Heart left ventricle (tissue), 16 donors: ENCODE measurements at regions of chr4 and their contacts with region 1.

Region 1: GRCh38 chr4:57158221-57158620 is 48.0 kb upstream of the IGFBP7 start:
- DNase-seq: no peak
- ATAC-seq: peak in 2 of 4 donors; percentile 47 to 50
- H3K4me3 ChIP-seq: no peak overlapping the region
- H3K27ac ChIP-seq: no peak overlapping the region
- H3K4me1 ChIP-seq: peaks cover 0 to 5% (median 0%) of the 10 kb centered on the region in 12 donors
- H3K27me3 ChIP-seq: no peaks in the 10 kb centered on the region
- CTCF ChIP-seq: peak in 4 of 12 donors; percentile 9 to 31 (median 18)
- POLR2A ChIP-seq: no peak

Region 2: DNA sequence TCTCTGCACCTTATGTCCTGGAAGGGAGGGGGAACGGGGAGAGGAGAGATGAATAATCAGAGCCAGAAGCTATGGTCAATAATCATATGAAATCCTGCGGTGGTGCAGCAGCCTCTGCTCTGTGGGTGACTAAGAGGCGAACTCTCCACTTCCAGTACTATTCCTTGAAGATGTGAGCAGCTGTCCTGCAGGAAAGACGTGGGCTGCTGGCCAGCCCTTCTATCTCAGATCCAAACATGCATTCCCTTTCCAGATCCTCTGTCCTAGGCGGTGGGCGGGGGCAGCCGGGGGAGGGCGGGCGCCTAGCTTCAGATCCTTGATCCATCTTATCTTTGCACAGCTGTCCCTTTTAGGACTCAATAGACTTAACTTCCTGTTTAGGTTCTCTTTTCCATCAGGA is 371.3 kb before region 1 on chr4:
- intact Hi-C with region 1: no loop called
- DNase-seq: peak; percentile 64 to 84 (median 79)
- ATAC-seq: peak; percentile 62 to 97 (median 88)
- H3K4me3 ChIP-seq: no peak overlapping the region
- H3K27ac ChIP-seq: peak overlapping the region in 10 of 12 donors; percentile 13 to 74 (median 53)
- H3K4me1 ChIP-seq: peaks cover 0 to 15% (median 0%) of the 10 kb centered on the region in 12 donors
- H3K27me3 ChIP-seq: no peaks in the 10 kb centered on the region
- CTCF ChIP-seq: no peak
- POLR2A ChIP-seq: no peak

Region 3: GRCh38 chr4:57037982-57038604 is 120.1 kb before region 1 on chr4:
- intact Hi-C with region 1: loop called in 9 of 10 experiments (anchors 2 to 10 kb)
- DNase-seq: peak; percentile 61 to 84 (median 67)
- ATAC-seq: peak; percentile 57 to 79 (median 66)
- H3K4me3 ChIP-seq: no peak overlapping the region
- H3K27ac ChIP-seq: peak overlapping the region in 3 of 12 donors; percentile 6 to 19 (median 18)
- H3K4me1 ChIP-seq: peaks cover 1 to 42% (median 19%) of the 10 kb centered on the region in 12 donors
- H3K27me3 ChIP-seq: no peaks in the 10 kb centered on the region
- CTCF ChIP-seq: peak; percentile 61 to 94 (median 82)
- POLR2A ChIP-seq: no peak

Region 4: GRCh38 chr4:57119054-57119651 is 39.1 kb before region 1 on chr4:
- intact Hi-C with region 1: loop called in 4 of 10 experiments (anchors 5 kb)
- DNase-seq: peak; percentile 60 to 89 (median 69)
- ATAC-seq: peak; percentile 91 to 97 (median 96)
- H3K4me3 ChIP-seq: peak overlapping the region in 9 of 12 donors; percentile 9 to 42 (median 24)
- H3K27ac ChIP-seq: peak overlapping the region; percentile 54 to 94 (median 84)
- H3K4me1 ChIP-seq: peaks cover 0 to 38% (median 19%) of the 10 kb centered on the region in 12 donors
- H3K27me3 ChIP-seq: no peaks in the 10 kb centered on the region
- CTCF ChIP-seq: no peak
- POLR2A ChIP-seq: no peak